BJ (cell line): ENCODE measurements at regions of chr2 and their contacts with region 1.

Region 1: GRCh38 chr2:23146011-23146410 is 239.0 kb upstream of the KLHL29 start:
- DNase-seq: no peak
- H3K4me3 ChIP-seq: no peak overlapping the region
- H3K27me3 ChIP-seq: no peaks in the 10 kb centered on the region
- CTCF ChIP-seq: no peak

Region 2: DNA sequence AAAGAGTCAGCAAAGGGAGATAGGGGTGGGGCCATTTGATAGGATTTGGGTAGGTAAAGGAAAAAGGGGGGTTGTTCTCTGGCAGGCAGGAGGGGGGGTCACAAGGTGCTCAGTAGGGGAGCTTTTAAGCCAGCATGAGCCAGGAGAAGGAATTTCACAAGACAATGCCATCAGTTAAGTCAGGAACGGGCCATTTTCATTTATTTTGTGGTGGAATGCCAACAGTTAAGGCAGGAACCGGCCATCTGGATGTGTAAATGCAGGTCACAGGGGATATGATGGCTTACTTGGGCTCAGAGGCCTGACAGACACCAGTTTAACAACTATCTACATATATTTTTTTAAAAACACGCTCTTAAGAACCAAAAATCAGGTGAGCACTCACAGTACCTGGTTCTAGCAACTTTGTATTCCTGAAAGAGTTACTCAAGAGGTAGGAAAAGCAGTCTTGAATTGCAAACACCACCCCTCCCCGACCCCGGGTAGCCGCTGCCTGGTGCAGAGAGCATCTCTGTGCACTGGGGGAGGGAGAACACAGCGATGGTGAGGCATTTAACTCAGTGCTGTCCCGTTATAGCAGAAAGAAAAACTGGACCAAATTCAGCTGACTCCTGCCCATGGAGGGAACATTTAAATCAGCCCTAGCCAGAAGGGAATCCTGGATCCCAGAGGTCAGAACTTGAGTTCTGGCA is 175.6 kb before region 1 on chr2:
- CTCF ChIA-PET with region 1: interaction called, 10 read pairs
- POLR2A ChIA-PET with region 1: no interaction called
- DNase-seq: no peak
- H3K4me3 ChIP-seq: no peak overlapping the region
- H3K27me3 ChIP-seq: no peaks in the 10 kb centered on the region
- CTCF ChIP-seq: no peak